ENCODE measurements at regions of chr1 and their contacts with region 1.

Region 1: DNA sequence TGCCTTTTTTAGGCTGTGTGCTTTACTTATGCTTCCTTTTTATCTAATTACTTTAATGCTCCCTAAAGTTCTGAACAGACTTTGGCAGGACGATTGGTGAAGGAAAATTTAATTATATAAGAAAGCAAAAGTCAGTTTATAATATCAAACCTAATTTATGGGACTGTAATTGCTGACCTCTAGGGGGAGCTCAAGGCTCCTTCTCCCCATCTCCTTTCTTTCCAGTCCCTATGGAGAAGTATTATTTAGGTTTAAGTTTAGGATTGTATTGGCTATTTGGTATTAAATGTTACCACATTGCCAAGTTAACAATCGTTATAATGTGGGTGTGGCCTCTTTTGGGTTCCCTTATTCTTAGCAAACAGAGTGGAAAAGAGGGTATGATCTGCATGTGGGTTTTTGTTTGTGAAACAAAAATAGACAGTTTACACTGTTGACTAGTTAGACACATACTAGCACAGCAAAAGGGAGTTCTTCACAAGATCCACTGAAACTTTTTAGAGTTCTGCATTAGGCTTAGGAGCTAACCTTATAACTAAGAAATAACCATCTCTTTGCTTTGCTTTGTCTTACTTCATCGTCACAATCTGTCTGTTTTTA is 48.2 kb upstream of the TNFSF4 start:
- DNase-seq: peak in 1 of 35 experiments; percentile 30
- ATAC-seq: no peak
- H3K4me3 ChIP-seq: no peak overlapping the region
- H3K4me3 Mint-ChIP-seq: no peak overlapping the region
- H3K27ac ChIP-seq: no peak overlapping the region
- H3K27ac Mint-ChIP-seq: no peak overlapping the region
- H3K4me1 ChIP-seq: no peaks in the 10 kb centered on the region
- H3K4me1 Mint-ChIP-seq: peaks cover 3 to 5% (median 5%) of the 10 kb centered on the region in 3 donors
- H3K27me3 ChIP-seq: no peaks in the 10 kb centered on the region
- H3K27me3 Mint-ChIP-seq: no peaks in the 10 kb centered on the region

Region 2: DNA sequence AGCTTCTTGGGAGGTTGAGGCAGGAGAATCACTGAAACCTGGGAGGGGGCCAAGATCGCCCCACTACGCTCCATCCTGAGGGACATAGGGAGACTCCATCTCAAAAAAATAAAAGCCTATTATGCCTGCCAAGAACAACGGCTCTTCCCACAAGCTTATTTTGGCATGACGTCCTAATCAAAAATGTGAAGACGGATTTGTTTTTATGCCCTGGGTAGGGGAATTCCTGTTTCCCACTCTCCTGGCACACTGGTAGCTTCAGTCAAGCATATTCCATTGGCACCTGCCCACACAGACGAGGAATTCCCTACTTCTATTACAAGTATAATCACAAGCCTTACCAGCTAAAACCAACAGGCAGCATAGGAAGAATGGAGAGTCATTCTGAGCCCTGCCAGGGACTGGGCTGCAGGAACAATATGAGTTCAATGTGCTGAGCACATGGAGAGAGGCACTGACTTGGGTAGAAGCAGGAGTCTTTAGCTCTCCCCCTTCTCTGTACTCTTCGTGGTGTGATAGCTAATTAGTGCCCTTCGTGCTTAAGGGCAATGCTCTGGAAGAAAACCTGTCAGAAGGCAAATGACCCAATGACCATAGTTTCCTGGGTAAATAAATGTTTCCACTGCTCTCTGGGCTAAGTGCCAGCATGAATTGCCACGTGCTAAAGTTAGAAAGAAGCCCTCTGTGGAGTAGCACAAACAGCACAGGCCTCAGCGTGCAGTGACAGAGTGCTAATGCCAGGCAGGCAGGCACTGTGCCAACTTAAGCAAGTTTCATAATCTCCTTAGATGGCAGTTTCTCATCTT is 65.0 kb before region 1 on chr1:
- CTCF ChIA-PET with region 1: no interaction called
- POLR2A ChIA-PET with region 1: no interaction called
- DNase-seq: no peak
- ATAC-seq: no peak
- H3K4me3 ChIP-seq: no peak overlapping the region
- H3K4me3 Mint-ChIP-seq: no peak overlapping the region
- H3K27ac ChIP-seq: no peak overlapping the region
- H3K27ac Mint-ChIP-seq: no peak overlapping the region
- H3K4me1 ChIP-seq: peaks cover 0 to 2% of the 10 kb centered on the region in 2 experiments
- H3K4me1 Mint-ChIP-seq: peaks cover 5 to 8% (median 6%) of the 10 kb centered on the region in 3 donors
- H3K27me3 ChIP-seq: no peaks in the 10 kb centered on the region
- H3K27me3 Mint-ChIP-seq: no peaks in the 10 kb centered on the region

Region 3: GRCh38 chr1:173608503-173609216 is 353.3 kb after region 1 on chr1:
- CTCF ChIA-PET with region 1: no interaction called
- POLR2A ChIA-PET with region 1: interaction called in 1 of 2 experiments, 10 read pairs
- DNase-seq: no peak
- ATAC-seq: no peak
- H3K4me3 ChIP-seq: no peak overlapping the region
- H3K4me3 Mint-ChIP-seq: no peak overlapping the region
- H3K27ac ChIP-seq: no peak overlapping the region
- H3K27ac Mint-ChIP-seq: no peak overlapping the region
- H3K4me1 ChIP-seq: no peaks in the 10 kb centered on the region
- H3K4me1 Mint-ChIP-seq: no peaks in the 10 kb centered on the region
- H3K27me3 ChIP-seq: peaks cover 0 to 6% of the 10 kb centered on the region in 2 experiments
- H3K27me3 Mint-ChIP-seq: peaks cover 0 to 6% of the 10 kb centered on the region in 2 donors

Measured in T-cell (primary cell).